ENCODE measurements at regions of chr9 and their contacts with region 1.

Region 1: GRCh38 chr9:100598641-100599145 is 20.8 kb downstream of the CAVIN4 start:
- DNase-seq: peak; percentile 75
- ATAC-seq: peak; percentile 89
- H3K4me3 ChIP-seq: peak overlapping the region; percentile 41 to 55
- H3K27ac ChIP-seq: peak overlapping the region; percentile 16
- H3K4me1 ChIP-seq: peaks cover 12 to 30% of the 10 kb centered on the region in 2 experiments
- H3K27me3 ChIP-seq: no peaks in the 10 kb centered on the region
- CTCF ChIP-seq: no peak
- POLR2A ChIP-seq: peak; percentile 73
- RAD21 ChIP-seq: no peak

Region 2: DNA sequence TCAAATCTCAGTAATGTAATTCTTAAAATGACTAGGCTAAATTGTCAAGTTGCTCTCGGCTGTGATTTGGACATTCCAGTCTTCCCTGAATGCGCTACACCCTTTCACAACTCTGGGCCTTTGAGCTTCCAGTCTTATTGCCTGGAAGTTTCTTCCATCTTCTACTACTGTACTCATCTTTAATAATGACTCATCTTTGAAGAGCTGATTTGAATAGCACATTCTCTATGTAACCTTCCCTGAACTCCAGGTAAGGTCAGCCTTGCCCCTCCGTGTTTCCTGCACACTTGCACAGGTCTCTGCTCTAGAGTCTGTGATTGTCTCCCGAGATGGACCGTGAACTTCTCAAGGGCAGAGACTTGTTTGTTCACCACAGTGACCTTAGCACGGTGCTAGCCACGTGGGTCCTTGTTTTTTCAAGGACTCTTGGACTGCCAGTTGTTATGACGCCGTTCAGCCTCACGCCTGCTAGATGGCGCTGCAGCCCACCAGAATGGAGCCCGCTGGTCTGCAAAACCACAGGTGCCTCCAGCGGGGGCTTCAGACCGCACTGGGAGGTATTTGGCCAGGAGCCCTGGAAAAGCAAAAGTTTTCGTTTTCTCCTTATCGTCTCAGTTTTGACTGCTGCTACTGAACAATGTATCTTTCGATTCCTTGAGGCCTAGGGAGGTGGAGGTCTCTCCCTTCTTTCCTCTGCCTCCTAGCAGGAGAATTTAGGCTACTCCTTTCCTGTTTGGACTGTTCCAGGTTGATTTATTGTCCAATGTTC is 1332.3 kb before region 1 on chr9:
- CTCF ChIA-PET with region 1: no interaction called
- POLR2A ChIA-PET with region 1: no interaction called
- RAD21 ChIA-PET with region 1: no interaction called
- intact Hi-C with region 1: loop called (anchors 2 kb)
- DNase-seq: peak; percentile 69
- ATAC-seq: peak; percentile 95
- H3K4me3 ChIP-seq: peak overlapping the region in 1 of 2 experiments; percentile 7; a peak in 1 of 4 replicates
- H3K27ac ChIP-seq: no peak overlapping the region
- H3K4me1 ChIP-seq: peaks cover 0 to 15% of the 10 kb centered on the region in 2 experiments; a peak in 2 of 4 replicates
- H3K27me3 ChIP-seq: no peaks in the 10 kb centered on the region
- CTCF ChIP-seq: peak; percentile 76 to 97 (median 89)
- POLR2A ChIP-seq: no peak
- RAD21 ChIP-seq: peak; percentile 93

Region 3: GRCh38 chr9:100028201-100028784 is 570.4 kb before region 1 on chr9:
- CTCF ChIA-PET with region 1: no interaction called
- POLR2A ChIA-PET with region 1: no interaction called
- RAD21 ChIA-PET with region 1: no interaction called
- intact Hi-C with region 1: loop called (anchors 1 kb)
- DNase-seq: peak; percentile 60
- ATAC-seq: peak; percentile 100
- H3K4me3 ChIP-seq: no peak overlapping the region
- H3K27ac ChIP-seq: no peak overlapping the region
- H3K4me1 ChIP-seq: no peaks in the 10 kb centered on the region
- H3K27me3 ChIP-seq: no peaks in the 10 kb centered on the region
- CTCF ChIP-seq: peak; percentile 74 to 96 (median 92)
- POLR2A ChIP-seq: no peak
- RAD21 ChIP-seq: peak; percentile 82

Region 4: GRCh38 chr9:100443781-100444768 is 154.6 kb before region 1 on chr9:
- CTCF ChIA-PET with region 1: no interaction called
- POLR2A ChIA-PET with region 1: no interaction called
- RAD21 ChIA-PET with region 1: no interaction called
- intact Hi-C with region 1: loop called (anchors 2 kb)
- DNase-seq: no peak
- ATAC-seq: no peak
- H3K4me3 ChIP-seq: no peak overlapping the region
- H3K27ac ChIP-seq: no peak overlapping the region
- H3K4me1 ChIP-seq: no peaks in the 10 kb centered on the region
- H3K27me3 ChIP-seq: no peaks in the 10 kb centered on the region
- CTCF ChIP-seq: no peak
- POLR2A ChIP-seq: no peak
- RAD21 ChIP-seq: no peak

Region 5: DNA sequence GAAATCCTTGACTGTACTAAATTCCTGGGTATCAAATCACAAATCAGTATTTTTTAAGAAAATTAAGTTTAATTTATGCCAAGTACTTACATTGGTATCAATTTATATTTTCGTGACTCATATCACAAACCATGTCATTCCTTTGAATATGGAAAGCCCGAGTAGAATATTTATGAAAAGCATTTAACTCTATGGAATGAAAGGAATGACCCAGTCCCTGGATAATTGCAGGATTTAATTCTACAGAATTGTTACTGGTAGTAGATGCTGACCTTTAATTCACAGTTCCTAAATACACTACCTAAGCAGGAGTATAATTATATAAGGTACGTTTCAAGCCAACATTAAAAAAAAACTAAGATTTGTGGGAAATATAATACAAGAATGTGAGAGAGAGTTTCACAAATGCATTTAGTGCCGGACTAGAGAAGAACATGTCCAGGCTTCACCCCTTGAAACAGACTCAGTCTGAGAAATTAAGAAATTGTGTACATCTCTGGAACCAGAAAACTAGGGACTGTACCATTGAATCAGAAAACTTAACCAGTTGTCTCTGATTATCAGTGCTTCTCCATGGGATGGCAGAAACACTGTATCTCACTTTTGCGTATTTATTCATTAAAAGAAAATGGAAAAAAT is 401.3 kb after region 1 on chr9:
- CTCF ChIA-PET with region 1: no interaction called
- POLR2A ChIA-PET with region 1: no interaction called
- RAD21 ChIA-PET with region 1: no interaction called
- intact Hi-C with region 1: no loop called
- DNase-seq: no peak
- ATAC-seq: no peak
- H3K4me3 ChIP-seq: no peak overlapping the region
- H3K27ac ChIP-seq: no peak overlapping the region
- H3K4me1 ChIP-seq: no peaks in the 10 kb centered on the region
- H3K27me3 ChIP-seq: no peaks in the 10 kb centered on the region; the same call in 1 of the 2 replicates
- CTCF ChIP-seq: no peak
- POLR2A ChIP-seq: no peak
- RAD21 ChIP-seq: no peak

Region 6: DNA sequence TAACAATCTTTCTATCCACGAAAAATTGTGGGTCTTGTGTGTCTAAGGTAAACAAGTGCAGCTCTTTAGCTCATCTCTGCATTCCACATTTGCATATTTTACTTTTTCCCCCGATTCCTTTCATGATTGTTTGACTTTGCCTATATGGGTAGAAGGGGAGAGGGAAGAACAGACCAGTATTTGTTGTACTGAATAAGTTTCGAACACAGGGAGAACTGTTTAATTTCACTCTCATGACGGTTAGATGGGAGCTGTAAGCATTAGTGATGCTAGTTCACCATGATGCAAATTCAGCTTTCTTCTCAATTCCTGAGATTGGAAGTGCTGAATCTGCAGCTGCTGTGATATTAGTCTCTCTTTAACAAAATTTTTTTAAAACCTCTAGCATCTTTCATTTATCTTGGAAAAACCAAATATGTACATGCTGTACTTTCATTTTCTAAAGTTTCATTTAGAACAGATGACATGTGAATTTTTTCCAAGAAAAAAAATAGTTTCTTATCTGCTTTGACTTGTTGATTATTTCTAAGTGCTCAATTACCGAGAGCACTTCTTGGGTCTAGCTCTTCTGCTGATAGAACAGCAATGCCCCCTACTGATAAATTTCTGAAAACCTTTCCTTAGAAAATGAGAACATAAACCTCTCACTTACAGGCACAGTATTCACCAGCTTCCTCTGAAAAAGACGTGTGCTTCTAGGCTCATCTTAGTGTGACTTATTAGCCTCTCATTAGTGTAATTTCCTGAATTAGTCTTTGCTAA is 636.6 kb after region 1 on chr9:
- CTCF ChIA-PET with region 1: interaction called, 22 read pairs
- POLR2A ChIA-PET with region 1: no interaction called
- RAD21 ChIA-PET with region 1: interaction called in 1 of 2 experiments, 4 read pairs
- intact Hi-C with region 1: loop called (anchors 1 kb)
- DNase-seq: peak; percentile 13
- ATAC-seq: peak; percentile 67
- H3K4me3 ChIP-seq: no peak overlapping the region
- H3K27ac ChIP-seq: no peak overlapping the region
- H3K4me1 ChIP-seq: no peaks in the 10 kb centered on the region
- H3K27me3 ChIP-seq: peaks cover 3% of the 10 kb centered on the region; the same call in 1 of the 2 replicates
- CTCF ChIP-seq: peak; percentile 33 to 58 (median 54); a peak in 5 of 6 replicates
- POLR2A ChIP-seq: no peak
- RAD21 ChIP-seq: peak; percentile 71

Region 7: GRCh38 chr9:101398068-101398929 is 799.6 kb after region 1 on chr9 and contains the starts of genes MRPL50 and ZNF189:
- CTCF ChIA-PET with region 1: no interaction called
- POLR2A ChIA-PET with region 1: interaction called, 5 read pairs
- RAD21 ChIA-PET with region 1: no interaction called
- intact Hi-C with region 1: loop called (anchors 5 kb)
- DNase-seq: peak; percentile 96
- ATAC-seq: peak; percentile 96
- H3K4me3 ChIP-seq: peak within 1 kb of the TSS; percentile 71 to 92
- H3K27ac ChIP-seq: peak within 1 kb of the TSS; percentile 44
- H3K4me1 ChIP-seq: peaks cover 3 to 10% of the 10 kb centered on the region in 2 experiments; a peak in 3 of 4 replicates
- H3K27me3 ChIP-seq: no peaks in the 10 kb centered on the region
- CTCF ChIP-seq: no peak
- POLR2A ChIP-seq: peak; percentile 79
- RAD21 ChIP-seq: no peak
- total RNA-seq, gene MRPL50: 14.6 TPM
- total RNA-seq, gene ZNF189: 10.6 TPM

Measured in HCT116 (cell line).